ENCODE measurements at regions of chr12 and their contacts with region 1.

Region 1: DNA sequence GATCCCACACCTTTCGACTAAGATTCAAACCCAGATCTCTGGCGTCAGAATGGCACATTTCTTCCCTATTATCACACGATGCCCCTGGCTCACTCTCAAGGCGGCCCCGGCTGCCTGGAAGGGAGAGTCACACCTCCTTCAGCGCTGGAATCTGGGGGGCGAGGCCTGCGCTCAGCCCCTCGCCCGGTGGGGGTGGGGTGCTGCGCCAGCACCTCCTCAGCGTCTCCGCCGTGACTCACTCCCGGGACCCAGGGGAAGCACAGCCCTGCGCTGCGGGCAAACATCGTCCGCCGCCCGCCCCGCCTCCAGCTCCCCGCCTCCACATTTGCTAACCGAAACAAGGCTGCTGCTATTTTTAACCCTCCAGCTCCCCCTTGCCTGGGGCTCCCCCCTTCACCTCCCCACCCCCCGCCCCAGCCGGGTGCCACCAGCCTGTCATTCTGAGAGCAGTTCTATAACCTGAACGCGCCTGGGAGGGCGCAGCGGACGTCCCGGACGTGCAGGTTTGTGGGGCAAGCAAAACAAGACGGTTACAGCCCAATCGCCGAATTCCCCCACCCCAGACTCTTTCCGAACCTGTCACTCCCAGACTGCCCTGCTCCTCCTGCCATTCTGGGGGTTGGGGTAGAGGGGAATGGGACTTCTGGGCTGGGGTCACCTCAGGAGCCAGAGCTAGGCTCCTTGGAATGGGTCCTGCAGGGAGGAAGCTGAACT is 6.7 kb downstream of the HDAC7 start:
- DNase-seq: peak; percentile 82 to 94
- ATAC-seq: peak; percentile 60 to 81 (median 72)
- H3K4me3 ChIP-seq: peak overlapping the region; percentile 42
- H3K4me3 Mint-ChIP-seq: peak overlapping the region; percentile 88
- H3K27ac ChIP-seq: peak overlapping the region; percentile 87
- H3K27ac Mint-ChIP-seq: peak overlapping the region; percentile 91 to 92
- H3K4me1 ChIP-seq: peaks cover 98% of the 10 kb centered on the region
- H3K4me1 Mint-ChIP-seq: peaks cover 85 to 94% of the 10 kb centered on the region in 2 donors
- H3K27me3 ChIP-seq: no peaks in the 10 kb centered on the region
- H3K27me3 Mint-ChIP-seq: no peaks in the 10 kb centered on the region
- CTCF ChIP-seq: no peak

Region 2: DNA sequence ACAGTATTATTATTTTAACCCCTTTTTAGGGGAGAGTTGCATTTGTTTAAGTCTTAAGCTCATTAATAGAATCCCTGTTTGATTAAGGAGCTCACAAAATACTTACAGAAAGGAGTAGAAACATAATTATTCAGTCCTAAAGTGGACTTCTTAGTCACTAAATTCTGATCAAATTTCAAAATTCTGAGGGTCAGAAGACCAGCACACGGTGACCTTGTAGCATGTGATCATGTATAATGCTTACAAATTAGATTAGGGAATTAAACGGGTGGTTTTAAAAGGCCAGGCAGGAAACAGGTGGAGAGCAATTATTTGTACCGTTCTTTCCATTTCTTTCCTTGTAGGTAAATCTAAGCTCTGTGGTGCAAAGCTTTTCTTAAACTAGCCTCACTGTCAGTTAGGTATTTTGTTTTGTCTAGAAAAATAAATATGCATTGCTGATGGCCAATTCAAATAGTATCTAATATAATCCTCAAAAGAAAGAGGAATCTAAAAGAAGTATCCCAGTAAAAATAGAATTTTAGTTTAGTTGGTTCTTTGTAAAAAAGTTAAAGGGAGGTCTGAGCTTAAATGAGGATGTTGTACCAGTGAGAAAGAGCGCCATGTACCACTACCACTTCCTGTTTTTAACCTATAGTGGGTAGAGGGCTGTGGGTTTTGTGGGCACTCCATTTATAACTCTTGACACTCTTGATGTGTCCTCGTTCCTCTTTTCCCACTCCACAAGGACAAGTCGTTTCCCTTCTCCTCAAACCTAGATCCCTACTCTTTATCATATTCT is 1595.2 kb before region 1 on chr12:
- intact Hi-C with region 1: loop called (anchors 5 kb)
- DNase-seq: peak; percentile 57 to 85
- ATAC-seq: peak; percentile 11 to 55 (median 32)
- H3K4me3 ChIP-seq: peak overlapping the region; percentile 8
- H3K4me3 Mint-ChIP-seq: peak overlapping the region; percentile 85
- H3K27ac ChIP-seq: peak overlapping the region; percentile 87
- H3K27ac Mint-ChIP-seq: peak overlapping the region; percentile 97 to 98
- H3K4me1 ChIP-seq: peaks cover 54% of the 10 kb centered on the region
- H3K4me1 Mint-ChIP-seq: peaks cover 90 to 97% of the 10 kb centered on the region in 2 donors
- H3K27me3 ChIP-seq: no peaks in the 10 kb centered on the region
- H3K27me3 Mint-ChIP-seq: no peaks in the 10 kb centered on the region
- CTCF ChIP-seq: no peak

Region 3: GRCh38 chr12:47591361-47591791 is 221.6 kb before region 1 on chr12:
- intact Hi-C with region 1: no loop called
- DNase-seq: no peak
- ATAC-seq: no peak
- H3K4me3 ChIP-seq: no peak overlapping the region
- H3K4me3 Mint-ChIP-seq: no peak overlapping the region
- H3K27ac ChIP-seq: no peak overlapping the region
- H3K27ac Mint-ChIP-seq: no peak overlapping the region
- H3K4me1 ChIP-seq: no peaks in the 10 kb centered on the region
- H3K4me1 Mint-ChIP-seq: no peaks in the 10 kb centered on the region
- H3K27me3 ChIP-seq: no peaks in the 10 kb centered on the region
- H3K27me3 Mint-ChIP-seq: peaks cover 6 to 10% of the 10 kb centered on the region in 2 donors
- CTCF ChIP-seq: no peak